Gastrocnemius medialis (tissue), 4 donors: ENCODE measurements at regions of chr15 and their contacts with region 1.

Region 1: DNA sequence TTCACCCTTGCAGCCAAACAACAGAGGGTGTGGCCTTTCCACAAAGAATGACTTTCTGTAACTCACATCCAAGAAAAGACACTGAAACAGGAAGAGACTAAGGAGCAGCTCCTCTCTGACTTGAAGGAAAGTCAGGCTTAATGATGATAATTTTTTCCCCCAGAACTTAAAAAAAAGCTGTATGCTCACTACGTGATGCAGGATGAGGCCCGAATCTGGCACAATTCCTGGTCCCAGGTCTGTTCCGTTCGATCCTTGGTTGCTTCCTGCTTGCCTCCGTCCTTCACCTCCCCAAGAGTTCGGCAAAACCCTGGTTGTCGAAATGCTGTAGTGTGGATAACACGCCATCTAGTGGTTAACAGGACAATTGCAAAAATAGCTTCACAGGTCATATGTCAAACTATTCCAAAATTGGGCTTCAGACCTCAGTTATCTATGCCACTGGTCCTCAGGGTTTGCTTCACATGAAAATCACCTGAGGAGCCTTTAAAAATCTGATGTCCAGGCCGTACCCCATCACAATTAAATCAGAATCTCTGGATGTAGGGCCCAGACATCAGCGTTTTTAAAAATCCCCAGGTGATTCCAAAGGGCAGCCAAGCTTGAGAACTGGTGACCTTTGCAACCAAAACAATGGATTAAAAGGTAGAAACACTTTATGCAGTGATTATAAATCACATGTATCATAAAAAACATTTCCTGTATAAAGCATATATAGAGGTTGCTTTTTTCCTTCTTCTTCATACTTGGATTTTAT is 28.1 kb upstream of the SYNM start:
- DNase-seq: peak; percentile 47
- ATAC-seq: peak; percentile 93 to 94
- H3K4me3 ChIP-seq: peak overlapping the region; percentile 36 to 53 (median 41)
- H3K27ac ChIP-seq: no peak overlapping the region
- H3K4me1 ChIP-seq: no peaks in the 10 kb centered on the region
- H3K27me3 ChIP-seq: no peaks in the 10 kb centered on the region
- CTCF ChIP-seq: peak; percentile 70 to 94 (median 89)
- POLR2A ChIP-seq: no peak

Region 2: GRCh38 chr15:98518823-98519561 is 557.7 kb before region 1 on chr15:
- in situ Hi-C with region 1: loop called in 3 of 4 experiments (anchors 5 to 10 kb)
- intact Hi-C with region 1: loop called (anchors 2 kb)
- DNase-seq: no peak
- ATAC-seq: peak; percentile 68 to 82
- H3K4me3 ChIP-seq: no peak overlapping the region
- H3K27ac ChIP-seq: no peak overlapping the region
- H3K4me1 ChIP-seq: no peaks in the 10 kb centered on the region
- H3K27me3 ChIP-seq: no peaks in the 10 kb centered on the region
- CTCF ChIP-seq: peak; percentile 67 to 90 (median 79)
- POLR2A ChIP-seq: no peak

Region 3: GRCh38 chr15:98668566-98669308 is 408.0 kb before region 1 on chr15:
- in situ Hi-C with region 1: loop called in 2 of 4 experiments (anchors 25 kb)
- intact Hi-C with region 1: loop called (anchors 5 kb)
- DNase-seq: no peak
- ATAC-seq: peak in 1 of 2 donors; percentile 39
- H3K4me3 ChIP-seq: peak overlapping the region in 1 of 4 donors; percentile 6
- H3K27ac ChIP-seq: peak overlapping the region in 3 of 4 donors; percentile 17 to 54 (median 33)
- H3K4me1 ChIP-seq: peaks cover 12 to 45% of the 10 kb centered on the region in 2 donors
- H3K27me3 ChIP-seq: no peaks in the 10 kb centered on the region
- CTCF ChIP-seq: no peak
- POLR2A ChIP-seq: peak in 1 of 2 donors; percentile 25

Region 4: DNA sequence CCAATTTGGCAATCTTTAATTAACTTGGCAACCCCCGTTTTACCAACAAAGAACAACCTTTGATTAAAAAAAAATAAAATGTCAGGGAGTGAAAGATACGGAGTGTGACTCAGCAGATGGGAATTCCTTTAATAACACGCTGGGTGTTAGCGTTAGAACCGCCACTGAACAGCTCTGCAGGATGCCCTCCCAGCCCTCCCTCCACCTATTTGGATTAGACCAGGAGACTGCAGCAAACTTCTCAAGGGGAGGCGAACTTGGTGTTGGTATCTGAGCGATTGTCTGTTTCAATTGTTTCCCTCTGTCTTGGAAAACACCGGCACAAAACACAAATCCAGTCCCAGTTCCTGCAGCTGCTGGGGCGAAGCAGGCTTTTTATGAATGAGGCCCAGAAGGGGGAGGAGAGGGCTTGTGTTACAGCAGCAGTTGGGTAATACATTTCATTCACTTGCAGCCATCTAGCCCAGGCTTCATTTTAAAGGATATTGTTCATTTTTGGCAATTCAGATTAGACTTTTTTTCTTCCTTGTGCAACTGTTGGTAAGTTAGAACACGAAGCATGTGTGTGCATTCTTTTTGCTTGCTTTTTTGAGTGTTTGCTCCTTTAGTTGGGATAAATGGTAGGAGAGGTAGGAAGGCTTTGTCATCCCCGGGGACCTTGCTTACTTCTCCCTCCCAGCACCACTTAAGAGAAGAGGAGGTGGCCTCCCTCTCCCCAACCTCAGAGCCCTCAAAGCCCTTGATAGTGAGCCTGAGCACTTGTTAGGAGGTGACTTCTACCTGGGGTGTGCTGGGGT is 276.1 kb before region 1 on chr15:
- in situ Hi-C with region 1: no loop called
- intact Hi-C with region 1: loop called (anchors 5 kb)
- DNase-seq: peak; percentile 20 to 37
- ATAC-seq: peak; percentile 91 to 93
- H3K4me3 ChIP-seq: peak overlapping the region in 3 of 4 donors; percentile 17 to 31 (median 25)
- H3K27ac ChIP-seq: peak overlapping the region in 1 of 4 donors; percentile 27
- H3K4me1 ChIP-seq: peaks cover 27 to 37% of the 10 kb centered on the region in 2 donors
- H3K27me3 ChIP-seq: no peaks in the 10 kb centered on the region
- CTCF ChIP-seq: no peak
- POLR2A ChIP-seq: no peak

Region 5: DNA sequence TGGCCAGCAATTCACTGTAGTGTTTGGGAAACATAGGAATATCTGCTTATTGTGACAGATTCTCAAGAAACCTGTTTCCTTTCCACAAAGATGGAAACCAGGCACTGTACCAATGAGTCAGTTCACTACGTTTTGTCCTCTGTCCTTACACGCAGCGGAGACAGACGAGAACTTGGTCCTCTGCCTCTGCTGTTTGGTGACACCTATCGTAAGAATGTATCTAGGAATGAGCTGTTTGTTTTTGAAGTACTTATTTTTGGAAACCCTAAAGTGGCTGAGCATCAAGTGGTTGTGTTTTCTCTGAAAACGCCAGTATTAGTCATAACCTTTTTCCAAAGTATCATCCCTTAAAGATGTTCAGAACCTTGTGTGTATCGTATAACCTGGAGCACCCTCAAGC is 162.1 kb before region 1 on chr15:
- in situ Hi-C with region 1: no loop called
- intact Hi-C with region 1: loop called (anchors 5 kb)
- DNase-seq: no peak
- ATAC-seq: no peak
- H3K4me3 ChIP-seq: no peak overlapping the region
- H3K27ac ChIP-seq: no peak overlapping the region
- H3K4me1 ChIP-seq: no peaks in the 10 kb centered on the region
- H3K27me3 ChIP-seq: no peaks in the 10 kb centered on the region
- CTCF ChIP-seq: no peak
- POLR2A ChIP-seq: no peak

Region 6: DNA sequence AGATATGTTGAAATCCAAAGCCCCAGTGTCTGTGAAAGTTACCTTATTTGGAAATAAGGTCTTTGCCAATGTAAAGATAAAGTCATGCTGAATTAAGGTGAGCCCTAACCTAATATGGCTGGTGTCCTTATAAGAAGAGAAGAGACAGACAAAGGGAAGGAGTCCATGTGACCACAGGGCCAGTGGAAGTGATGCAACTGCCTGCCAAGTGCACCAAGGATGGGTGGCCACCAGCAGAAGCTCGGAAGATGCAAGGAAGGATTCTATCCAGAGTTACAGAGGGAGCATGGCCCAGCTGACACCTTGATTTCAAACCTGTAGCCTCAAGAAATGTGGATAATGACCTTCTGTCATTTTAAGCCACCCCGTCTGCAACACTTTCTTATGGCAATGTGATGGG is 33.8 kb before region 1 on chr15:
- in situ Hi-C with region 1: no loop called
- intact Hi-C with region 1: no loop called
- DNase-seq: no peak
- ATAC-seq: no peak
- H3K4me3 ChIP-seq: no peak overlapping the region
- H3K27ac ChIP-seq: no peak overlapping the region
- H3K4me1 ChIP-seq: no peaks in the 10 kb centered on the region
- H3K27me3 ChIP-seq: no peaks in the 10 kb centered on the region
- CTCF ChIP-seq: no peak
- POLR2A ChIP-seq: no peak

Region 7: DNA sequence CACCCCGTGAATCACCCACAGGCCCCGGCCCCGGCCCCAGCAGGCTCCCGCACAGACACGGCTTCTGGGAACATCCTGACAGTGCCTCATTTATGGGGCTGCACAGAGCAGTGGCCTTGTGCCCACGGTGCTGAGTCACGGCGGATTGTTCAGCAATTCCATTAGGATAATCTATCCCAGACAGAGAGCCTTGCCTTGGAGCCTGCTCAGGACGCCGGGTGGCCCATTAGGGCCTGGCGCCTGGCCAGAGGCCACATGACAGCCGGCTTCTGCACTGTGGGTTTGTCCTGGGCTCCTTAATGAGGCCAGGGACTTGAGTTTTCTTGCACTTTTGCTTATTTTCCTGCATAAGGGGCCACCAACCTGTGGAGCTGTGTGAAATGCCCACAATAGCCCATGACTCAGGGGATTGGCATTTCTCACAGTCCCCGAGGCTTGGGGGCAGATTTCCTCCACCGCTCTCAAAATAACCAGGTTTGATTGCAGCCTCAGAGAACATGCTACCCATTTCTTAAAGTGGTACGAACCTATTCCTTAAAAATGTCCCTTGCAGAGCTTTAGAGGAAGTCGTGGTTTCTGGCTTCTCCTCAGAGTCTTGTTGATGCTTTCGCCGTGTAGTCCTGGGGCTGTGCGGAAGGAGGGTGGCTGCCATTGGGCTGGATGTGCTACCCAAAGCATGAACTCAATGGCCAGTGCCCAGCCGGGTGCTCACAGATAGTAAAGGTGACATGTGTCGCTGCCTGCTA is 47.1 kb after region 1 on chr15:
- in situ Hi-C with region 1: no loop called
- intact Hi-C with region 1: no loop called
- DNase-seq: peak; percentile 85 to 93
- ATAC-seq: peak; percentile 82 to 88
- H3K4me3 ChIP-seq: peak overlapping the region; percentile 33 to 59 (median 44)
- H3K27ac ChIP-seq: peak overlapping the region; percentile 88 to 97 (median 94)
- H3K4me1 ChIP-seq: peaks cover 89 to 91% of the 10 kb centered on the region in 2 donors
- H3K27me3 ChIP-seq: no peaks in the 10 kb centered on the region
- CTCF ChIP-seq: no peak
- POLR2A ChIP-seq: peak; percentile 40 to 52